CD8-positive, alpha-beta T cell (primary cell): ENCODE measurements at regions of chr2 and their contacts with region 1.

Region 1: DNA sequence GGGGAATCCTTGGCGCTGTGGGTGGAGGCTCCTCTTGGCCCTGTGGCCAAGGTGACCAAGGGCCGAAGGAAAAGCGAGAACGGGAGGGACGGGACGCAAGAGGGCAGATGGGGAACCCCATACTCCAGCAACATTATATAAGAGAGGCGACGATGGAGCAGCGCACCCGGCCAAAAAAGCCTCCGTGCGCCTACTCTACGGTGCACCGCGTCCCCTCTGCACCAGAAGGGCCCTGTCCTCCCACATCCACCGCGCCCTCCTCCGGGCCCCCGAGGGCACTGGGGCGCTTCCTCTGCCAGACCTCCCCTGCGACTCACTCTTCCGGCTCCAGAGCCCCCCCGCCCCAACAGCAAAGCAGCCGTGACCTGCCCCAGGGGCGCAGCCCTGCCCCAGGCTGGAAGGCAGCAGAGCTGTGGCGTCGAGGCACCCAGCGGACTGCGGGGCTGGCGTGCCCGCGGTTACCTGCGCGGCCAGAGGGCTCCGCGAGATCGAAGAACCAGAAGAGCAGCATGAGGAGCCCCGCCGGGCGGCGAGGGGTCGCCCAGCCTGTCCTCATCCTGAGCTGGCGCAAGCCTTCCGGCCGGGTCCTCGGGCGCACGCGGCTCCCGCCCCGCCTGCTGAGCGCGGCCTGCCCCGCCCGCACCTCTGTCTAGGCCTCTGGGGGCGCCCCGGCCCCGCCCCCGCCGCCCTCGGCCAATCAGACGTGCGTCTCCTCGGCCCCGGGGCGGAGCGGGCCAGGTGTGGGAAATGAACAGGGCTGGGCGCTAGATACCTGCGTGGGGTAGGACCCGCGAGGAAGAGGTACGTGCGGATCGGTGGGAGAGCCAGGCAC is 106.3 kb upstream of the CD302 start:
- DNase-seq: peak; percentile 68 to 90 (median 81)
- ATAC-seq: peak; percentile 81
- H3K4me3 ChIP-seq: peak within 1 kb of the TSS; percentile 91 to 97
- H3K4me3 Mint-ChIP-seq: peak within 1 kb of the TSS; percentile 98
- H3K27ac ChIP-seq: peak within 1 kb of the TSS; percentile 90 to 94
- H3K27ac Mint-ChIP-seq: peak within 1 kb of the TSS; percentile 98
- H3K4me1 ChIP-seq: peaks cover 12% of the 10 kb centered on the region
- H3K4me1 Mint-ChIP-seq: peaks cover 46% of the 10 kb centered on the region
- H3K27me3 ChIP-seq: no peaks in the 10 kb centered on the region
- H3K27me3 Mint-ChIP-seq: no peaks in the 10 kb centered on the region
- CTCF ChIP-seq: no peak

Region 2: DNA sequence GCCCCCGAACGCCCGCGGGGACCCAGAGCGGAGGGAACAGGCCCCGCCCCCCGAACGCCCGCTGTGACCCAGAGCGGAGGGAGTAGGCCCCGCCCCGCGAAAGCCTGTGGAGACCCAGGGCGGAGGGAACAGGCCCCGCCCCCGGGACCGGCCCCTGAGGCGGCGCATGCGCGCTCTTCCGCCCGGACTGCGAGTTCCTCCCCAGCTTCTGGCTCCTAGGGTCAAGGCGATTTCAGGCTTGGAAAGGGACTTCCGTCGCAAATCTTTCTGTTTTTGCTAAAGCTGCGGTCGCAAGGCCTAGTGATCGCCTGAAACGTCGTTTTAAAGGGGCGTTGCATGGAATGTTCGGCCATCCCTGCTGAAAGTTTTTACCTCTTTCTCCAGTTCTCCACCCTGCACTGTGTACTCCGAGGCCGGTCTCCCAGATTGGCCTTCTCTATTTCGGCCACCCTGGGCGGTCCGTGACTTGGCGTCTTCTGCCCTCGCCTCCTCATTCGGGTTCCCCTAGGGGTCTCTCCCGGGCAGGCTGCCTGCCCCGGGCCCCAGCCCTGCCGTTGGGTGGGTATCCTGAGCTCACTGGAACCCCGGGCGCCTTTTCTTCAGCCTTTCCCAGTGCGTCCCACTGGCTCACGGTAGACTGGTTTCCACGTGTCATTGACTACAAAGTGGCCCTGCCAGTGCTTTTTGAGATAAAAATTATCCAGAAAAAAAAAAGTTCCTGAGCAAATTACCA is 617.5 kb before region 1 on chr2:
- CTCF ChIA-PET with region 1: no interaction called
- POLR2A ChIA-PET with region 1: no interaction called
- intact Hi-C with region 1: loop called in 1 of 2 experiments (anchors 5 kb)
- DNase-seq: peak; percentile 93 to 99 (median 97)
- ATAC-seq: peak; percentile 99
- H3K4me3 ChIP-seq: peak overlapping the region; percentile 65 to 86
- H3K4me3 Mint-ChIP-seq: peak overlapping the region; percentile 90
- H3K27ac ChIP-seq: peak overlapping the region; percentile 58 to 69
- H3K27ac Mint-ChIP-seq: peak overlapping the region; percentile 86
- H3K4me1 ChIP-seq: peaks cover 18% of the 10 kb centered on the region
- H3K4me1 Mint-ChIP-seq: peaks cover 33% of the 10 kb centered on the region
- H3K27me3 ChIP-seq: no peaks in the 10 kb centered on the region
- H3K27me3 Mint-ChIP-seq: no peaks in the 10 kb centered on the region
- CTCF ChIP-seq: no peak

Region 3: DNA sequence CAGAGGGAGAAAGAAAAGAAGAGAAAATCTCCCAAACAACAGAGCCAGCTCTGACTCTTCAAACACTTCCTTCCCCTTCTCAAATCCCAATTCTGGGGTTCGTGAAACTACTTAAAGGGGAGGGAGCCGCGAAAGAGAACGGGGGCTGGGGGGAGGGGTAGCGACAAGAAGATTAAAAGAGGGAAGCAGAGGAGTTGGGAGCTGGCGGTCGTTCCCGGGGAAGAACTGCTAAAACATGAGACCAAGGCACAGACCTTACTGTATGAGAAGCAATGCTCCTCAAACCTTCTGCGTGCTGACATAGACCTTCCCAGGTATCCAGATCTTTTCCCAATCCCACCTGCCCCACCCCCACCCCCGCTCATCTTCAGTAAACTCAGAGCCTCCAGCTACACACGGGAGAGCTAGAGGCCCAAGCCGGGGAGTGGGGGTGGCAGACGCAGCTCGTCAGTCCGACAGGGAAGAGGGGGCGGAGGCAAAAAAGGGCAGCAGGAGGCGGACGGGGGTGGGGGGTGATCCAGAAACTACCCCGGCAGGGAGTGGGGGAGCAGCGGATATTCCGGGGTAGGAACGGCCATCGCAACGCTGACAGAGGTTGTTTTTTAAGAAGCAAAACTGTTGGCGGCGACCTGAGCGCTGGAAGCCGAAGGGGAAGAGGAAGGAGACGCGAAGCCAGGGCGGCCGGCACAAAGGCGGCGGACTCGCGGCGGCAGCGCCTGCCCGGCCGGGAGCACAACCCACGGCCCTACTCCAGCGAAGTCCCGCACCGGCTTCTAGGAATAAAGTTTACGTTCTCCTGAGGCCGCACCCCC is 289.0 kb before region 1 on chr2:
- CTCF ChIA-PET with region 1: no interaction called
- POLR2A ChIA-PET with region 1: no interaction called
- intact Hi-C with region 1: loop called in 1 of 2 experiments (anchors 10 kb)
- DNase-seq: peak in 8 of 9 experiments; percentile 15 to 68 (median 34)
- ATAC-seq: peak; percentile 68
- H3K4me3 ChIP-seq: peak overlapping the region; percentile 60 to 65
- H3K4me3 Mint-ChIP-seq: peak overlapping the region; percentile 84
- H3K27ac ChIP-seq: no peak overlapping the region
- H3K27ac Mint-ChIP-seq: no peak overlapping the region
- H3K4me1 ChIP-seq: no peaks in the 10 kb centered on the region
- H3K4me1 Mint-ChIP-seq: peaks cover 17% of the 10 kb centered on the region
- H3K27me3 ChIP-seq: no peaks in the 10 kb centered on the region
- H3K27me3 Mint-ChIP-seq: peaks cover 20% of the 10 kb centered on the region
- CTCF ChIP-seq: no peak

Region 4: DNA sequence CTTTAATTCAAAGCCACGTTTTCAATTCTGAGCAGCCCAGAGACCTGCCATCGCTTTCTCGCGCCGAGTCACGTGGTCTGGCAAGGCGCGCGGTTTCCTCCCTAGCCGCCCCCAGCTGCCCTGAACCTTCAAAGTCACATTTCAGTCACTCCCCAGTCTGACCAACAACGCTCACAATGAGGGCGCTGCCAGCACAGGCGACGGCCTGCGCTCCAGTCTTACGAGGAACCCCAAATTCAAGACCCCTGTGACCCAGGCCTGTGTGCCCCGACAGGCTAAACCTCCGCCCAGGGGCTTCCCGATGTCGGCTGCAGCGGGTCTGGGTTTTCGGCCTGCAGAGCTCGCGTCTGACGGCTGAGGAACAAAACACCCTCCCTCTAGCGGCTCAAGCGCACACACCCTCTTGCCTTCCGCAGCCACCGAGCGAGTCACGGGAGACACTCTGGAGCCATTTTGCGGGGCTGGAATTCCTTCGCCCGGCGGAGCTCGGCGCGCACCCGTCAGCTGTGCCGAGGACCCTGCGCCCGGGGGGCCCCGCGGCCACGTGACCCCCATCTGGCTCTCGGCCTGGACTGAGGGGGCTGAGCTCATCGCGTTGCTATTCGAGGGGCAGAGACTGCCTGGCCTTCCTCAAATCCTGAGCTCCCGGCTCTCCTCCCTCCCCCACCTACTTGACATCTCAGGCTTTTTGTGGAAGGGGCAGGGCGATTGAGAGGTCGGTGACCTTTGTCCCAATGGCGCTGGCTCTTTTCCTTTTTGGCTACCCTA is 365.6 kb after region 1 on chr2:
- CTCF ChIA-PET with region 1: no interaction called
- POLR2A ChIA-PET with region 1: interaction called, 3 read pairs
- intact Hi-C with region 1: loop called in 1 of 2 experiments (anchors 10 kb)
- DNase-seq: peak; percentile 37 to 85 (median 67)
- ATAC-seq: peak; percentile 88
- H3K4me3 ChIP-seq: peak overlapping the region; percentile 57 to 75
- H3K4me3 Mint-ChIP-seq: peak overlapping the region; percentile 87
- H3K27ac ChIP-seq: peak overlapping the region; percentile 48 to 65
- H3K27ac Mint-ChIP-seq: peak overlapping the region; percentile 94
- H3K4me1 ChIP-seq: peaks cover 17% of the 10 kb centered on the region
- H3K4me1 Mint-ChIP-seq: peaks cover 28% of the 10 kb centered on the region
- H3K27me3 ChIP-seq: no peaks in the 10 kb centered on the region
- H3K27me3 Mint-ChIP-seq: no peaks in the 10 kb centered on the region
- CTCF ChIP-seq: peak; percentile 70